ENCODE measurements at regions of chr11 and their contacts with region 1.

Region 1: GRCh38 chr11:73236854-73237253 is 18.8 kb downstream of the P2RY2 start:
- DNase-seq: peak; percentile 50
- ATAC-seq: peak; percentile 54
- H3K4me3 ChIP-seq: no peak overlapping the region
- H3K4me3 Mint-ChIP-seq: no peak overlapping the region
- H3K27ac ChIP-seq: no peak overlapping the region
- H3K27ac Mint-ChIP-seq: no peak overlapping the region
- H3K4me1 ChIP-seq: no peaks in the 10 kb centered on the region
- H3K4me1 Mint-ChIP-seq: no peaks in the 10 kb centered on the region
- H3K27me3 ChIP-seq: no peaks in the 10 kb centered on the region
- H3K27me3 Mint-ChIP-seq: no peaks in the 10 kb centered on the region
- CTCF ChIP-seq: peak; percentile 51

Region 2: GRCh38 chr11:73059915-73060314 is 176.9 kb before region 1 on chr11:
- CTCF ChIA-PET with region 1: no interaction called
- POLR2A ChIA-PET with region 1: no interaction called
- intact Hi-C with region 1: no loop called
- DNase-seq: no peak
- ATAC-seq: no peak
- H3K4me3 ChIP-seq: no peak overlapping the region
- H3K4me3 Mint-ChIP-seq: peak overlapping the region; percentile 12
- H3K27ac ChIP-seq: peak overlapping the region in 1 of 2 donors; percentile 76
- H3K27ac Mint-ChIP-seq: peak overlapping the region; percentile 60
- H3K4me1 ChIP-seq: peaks cover 53 to 82% of the 10 kb centered on the region in 2 donors
- H3K4me1 Mint-ChIP-seq: peaks cover 89% of the 10 kb centered on the region
- H3K27me3 ChIP-seq: no peaks in the 10 kb centered on the region
- H3K27me3 Mint-ChIP-seq: no peaks in the 10 kb centered on the region
- CTCF ChIP-seq: no peak

Region 3: DNA sequence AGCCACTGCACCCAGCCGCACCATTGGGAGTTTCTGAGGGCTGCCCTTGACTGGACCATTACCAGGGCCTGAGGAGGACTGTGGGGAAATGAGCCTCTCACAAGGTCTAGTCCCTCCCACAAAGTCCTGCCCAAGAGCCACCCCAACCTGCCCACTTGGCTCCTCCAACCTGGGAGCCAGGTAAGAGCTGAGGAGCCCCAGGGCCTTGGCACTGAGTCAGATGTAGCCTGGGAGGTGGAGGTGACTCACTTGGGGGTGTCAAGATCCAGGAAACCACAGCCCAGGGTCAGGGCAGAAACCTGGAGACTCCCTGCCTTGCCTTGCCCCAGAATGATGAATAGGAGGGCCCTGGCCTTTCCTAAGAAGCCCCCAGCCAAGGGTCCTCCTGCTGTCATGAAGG is 44.6 kb before region 1 on chr11:
- CTCF ChIA-PET with region 1: interaction called, 281 read pairs
- POLR2A ChIA-PET with region 1: no interaction called
- intact Hi-C with region 1: loop called (anchors 1 kb)
- DNase-seq: no peak
- ATAC-seq: no peak
- H3K4me3 ChIP-seq: no peak overlapping the region
- H3K4me3 Mint-ChIP-seq: no peak overlapping the region
- H3K27ac ChIP-seq: no peak overlapping the region
- H3K27ac Mint-ChIP-seq: no peak overlapping the region
- H3K4me1 ChIP-seq: peaks cover 18 to 40% of the 10 kb centered on the region in 2 donors
- H3K4me1 Mint-ChIP-seq: peaks cover 38% of the 10 kb centered on the region
- H3K27me3 ChIP-seq: no peaks in the 10 kb centered on the region
- H3K27me3 Mint-ChIP-seq: no peaks in the 10 kb centered on the region
- CTCF ChIP-seq: no peak

Measured in B cell (primary cell).